ENCODE measurements at regions of chr2 and their contacts with region 1.

Region 1: GRCh38 chr2:130258356-130258755 is 60.1 kb upstream of the TUBA3E start:
- DNase-seq: no peak

Region 2: GRCh38 chr2:130380096-130380934 is 122.0 kb after region 1 on chr2:
- intact Hi-C with region 1: loop called in 1 of 2 experiments (anchors 2 kb)
- DNase-seq: no peak